ENCODE measurements at regions of chr2 and their contacts with region 1.

Region 1: GRCh38 chr2:223993621-223994232 is 36.5 kb downstream of the MRPL44 start:
- DNase-seq: peak; percentile 62
- H3K27ac ChIP-seq: no peak overlapping the region
- CTCF ChIP-seq: peak; percentile 75

Region 2: DNA sequence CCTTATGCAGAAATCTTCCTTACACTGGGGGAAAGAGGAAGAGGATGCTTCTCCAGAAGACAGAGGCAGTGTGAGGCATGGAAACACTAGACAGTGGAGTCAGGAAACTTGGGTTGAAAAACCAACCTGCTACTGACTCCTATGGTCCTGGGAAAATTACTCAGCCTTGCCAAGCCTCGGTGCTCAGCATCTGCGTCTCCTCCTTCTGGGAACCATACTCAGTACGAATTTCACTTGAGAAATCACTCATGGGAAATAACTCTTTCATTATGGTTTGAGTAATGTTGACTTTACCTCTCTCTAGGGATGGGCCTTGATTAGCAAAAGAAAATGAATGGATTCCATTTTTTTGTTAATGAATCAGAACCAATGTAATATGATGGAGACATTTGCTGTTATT is 845.2 kb before region 1 on chr2:
- CTCF ChIA-PET with region 1: no interaction called
- POLR2A ChIA-PET with region 1: no interaction called
- DNase-seq: no peak
- H3K27ac ChIP-seq: no peak overlapping the region
- CTCF ChIP-seq: no peak

Region 3: DNA sequence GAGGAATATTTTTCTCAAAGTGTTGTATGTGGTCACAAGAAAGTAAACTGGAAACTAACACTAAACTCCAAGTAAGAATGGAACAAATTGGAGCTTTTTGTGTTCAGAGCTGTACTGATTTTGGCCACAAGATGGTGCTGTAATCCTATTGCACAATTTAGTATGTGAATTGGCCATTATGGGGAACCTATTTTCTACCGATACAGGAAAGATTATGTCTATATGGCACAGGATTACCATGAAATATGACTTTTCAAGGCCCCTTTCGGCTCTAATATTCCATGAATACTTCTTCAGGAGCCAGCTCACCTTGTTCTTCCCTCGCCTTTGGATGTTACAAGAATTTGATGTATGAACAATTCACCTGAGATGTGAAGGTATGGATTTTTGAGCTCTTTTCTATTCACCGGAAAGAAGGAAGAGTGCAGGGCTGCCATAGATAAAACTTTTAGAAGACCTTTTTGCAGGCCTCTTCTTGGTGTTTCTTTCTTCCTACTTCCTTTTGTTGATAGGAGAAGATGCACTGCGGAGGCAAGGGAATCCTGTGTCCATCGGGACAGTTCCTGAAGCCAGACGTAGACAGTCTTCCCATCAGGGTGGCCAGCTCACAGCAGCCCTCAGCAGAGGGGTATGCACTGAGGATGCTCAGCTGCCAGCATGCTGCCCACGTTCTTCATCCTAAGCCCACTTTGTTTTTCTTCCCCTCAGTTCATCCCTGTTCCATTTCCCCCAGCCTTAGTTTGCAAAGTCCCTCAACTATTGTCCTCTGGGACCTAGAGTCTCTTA is 23.2 kb before region 1 on chr2:
- CTCF ChIA-PET with region 1: interaction called, 13 read pairs
- POLR2A ChIA-PET with region 1: no interaction called
- DNase-seq: peak; percentile 32
- H3K27ac ChIP-seq: peak overlapping the region; percentile 37; the same call in 1 of the 2 replicates
- CTCF ChIP-seq: peak; percentile 92

Measured in RWPE1 (cell line).